ENCODE measurements at regions of chr10 and their contacts with region 1.

Region 1: DNA sequence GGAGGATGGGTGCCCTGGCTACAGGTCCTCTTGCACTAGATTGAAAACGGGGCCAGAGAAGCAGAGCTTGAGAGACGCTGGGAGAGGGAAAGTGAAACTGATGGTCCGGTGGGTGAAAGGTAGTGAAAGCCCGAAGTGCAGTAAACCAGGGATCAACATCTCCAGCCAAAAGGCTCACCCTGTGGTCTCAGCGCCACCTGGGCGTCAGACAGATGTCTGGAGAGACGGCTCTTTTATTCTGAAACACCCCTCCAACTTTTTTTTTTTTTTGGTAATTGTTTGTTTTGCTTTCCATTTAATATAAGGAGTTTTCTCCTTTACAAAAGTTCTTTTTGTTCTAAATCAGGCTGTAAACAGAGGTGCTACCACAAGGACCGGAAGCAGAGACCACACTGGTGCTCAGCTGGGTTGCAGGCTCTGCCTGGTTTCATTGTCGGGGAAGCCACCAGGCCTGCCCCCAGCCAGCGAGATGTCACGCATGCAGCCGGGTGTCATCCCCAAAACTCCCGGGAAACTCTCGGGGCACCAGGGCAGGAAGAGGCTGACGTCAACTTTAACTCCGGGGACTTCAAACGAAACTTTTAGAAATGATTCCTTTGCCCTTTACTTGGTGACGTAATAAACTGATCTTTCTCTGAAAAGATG is 11.2 kb downstream of the IL2RA start:
- DNase-seq: peak; percentile 84 to 97 (median 97)
- H3K4me3 ChIP-seq: peak overlapping the region; percentile 27 to 81 (median 55)
- H3K27ac ChIP-seq: peak overlapping the region; percentile 42 to 71
- H3K4me1 ChIP-seq: peaks cover 24 to 61% (median 55%) of the 10 kb centered on the region in 4 experiments
- H3K27me3 ChIP-seq: no peaks in the 10 kb centered on the region

Region 2: DNA sequence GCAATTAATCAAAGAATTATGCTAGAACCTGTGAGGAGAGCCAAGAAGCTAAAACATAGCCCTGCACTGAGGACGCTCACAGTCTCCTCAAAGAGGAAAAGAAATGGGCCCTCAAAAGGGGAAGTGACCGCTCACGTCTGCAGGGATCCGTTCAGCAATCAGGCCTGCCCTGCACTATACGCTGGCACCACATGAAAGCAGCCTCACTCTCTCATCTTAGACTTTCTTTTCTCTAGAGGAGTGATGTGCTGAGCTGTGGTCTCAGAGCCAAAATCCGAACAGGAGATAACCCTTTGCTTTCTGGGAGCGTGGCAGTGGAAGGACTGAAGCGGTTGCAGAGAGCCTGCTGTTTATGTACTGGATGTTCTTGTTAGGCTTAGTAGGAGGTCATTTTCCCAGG is 17.5 kb after region 1 on chr10:
- CTCF ChIA-PET with region 1: interaction called, 70 read pairs
- POLR2A ChIA-PET with region 1: interaction called, 5 read pairs
- DNase-seq: peak; percentile 74 to 97 (median 96)
- H3K4me3 ChIP-seq: peak overlapping the region in 1 of 7 experiments; percentile 31
- H3K27ac ChIP-seq: peak overlapping the region; percentile 31 to 67
- H3K4me1 ChIP-seq: peaks cover 32 to 78% (median 73%) of the 10 kb centered on the region in 4 experiments
- H3K27me3 ChIP-seq: no peaks in the 10 kb centered on the region

Measured in common myeloid progenitor, CD34-positive (primary cell).